ENCODE measurements at regions of chr9 and their contacts with region 1.

Region 1: DNA sequence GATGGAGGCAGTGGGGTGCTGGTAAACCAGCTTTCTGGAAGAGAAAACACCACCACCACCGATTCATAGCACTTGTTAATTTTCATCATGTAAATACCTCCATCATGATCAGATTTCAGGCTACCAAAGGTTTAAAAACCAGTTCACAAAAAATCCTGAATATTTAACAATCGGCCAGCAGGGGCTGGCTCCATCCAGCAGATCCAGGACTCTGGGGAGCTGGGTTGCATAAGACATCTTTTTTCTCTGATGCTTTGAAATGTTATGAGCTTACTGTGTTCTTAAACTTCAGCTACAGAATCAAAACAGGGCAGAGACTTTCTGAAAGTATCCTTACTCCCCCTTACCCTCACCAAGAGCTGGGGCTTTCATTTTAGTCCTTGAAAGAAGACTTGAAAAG is 14.6 kb upstream of the RNF183 start:
- DNase-seq: no peak
- ATAC-seq: no peak
- H3K4me3 ChIP-seq: no peak overlapping the region
- H3K27ac ChIP-seq: no peak overlapping the region
- H3K4me1 ChIP-seq: no peaks in the 10 kb centered on the region
- H3K27me3 ChIP-seq: no peaks in the 10 kb centered on the region
- CTCF ChIP-seq: no peak

Region 2: GRCh38 chr9:113361304-113362018 is 43.7 kb after region 1 on chr9:
- intact Hi-C with region 1: no loop called
- DNase-seq: no peak
- ATAC-seq: peak in 3 of 4 donors; percentile 13 to 56 (median 43)
- H3K4me3 ChIP-seq: no peak overlapping the region
- H3K27ac ChIP-seq: no peak overlapping the region
- H3K4me1 ChIP-seq: no peaks in the 10 kb centered on the region
- H3K27me3 ChIP-seq: no peaks in the 10 kb centered on the region
- CTCF ChIP-seq: no peak

Region 3: DNA sequence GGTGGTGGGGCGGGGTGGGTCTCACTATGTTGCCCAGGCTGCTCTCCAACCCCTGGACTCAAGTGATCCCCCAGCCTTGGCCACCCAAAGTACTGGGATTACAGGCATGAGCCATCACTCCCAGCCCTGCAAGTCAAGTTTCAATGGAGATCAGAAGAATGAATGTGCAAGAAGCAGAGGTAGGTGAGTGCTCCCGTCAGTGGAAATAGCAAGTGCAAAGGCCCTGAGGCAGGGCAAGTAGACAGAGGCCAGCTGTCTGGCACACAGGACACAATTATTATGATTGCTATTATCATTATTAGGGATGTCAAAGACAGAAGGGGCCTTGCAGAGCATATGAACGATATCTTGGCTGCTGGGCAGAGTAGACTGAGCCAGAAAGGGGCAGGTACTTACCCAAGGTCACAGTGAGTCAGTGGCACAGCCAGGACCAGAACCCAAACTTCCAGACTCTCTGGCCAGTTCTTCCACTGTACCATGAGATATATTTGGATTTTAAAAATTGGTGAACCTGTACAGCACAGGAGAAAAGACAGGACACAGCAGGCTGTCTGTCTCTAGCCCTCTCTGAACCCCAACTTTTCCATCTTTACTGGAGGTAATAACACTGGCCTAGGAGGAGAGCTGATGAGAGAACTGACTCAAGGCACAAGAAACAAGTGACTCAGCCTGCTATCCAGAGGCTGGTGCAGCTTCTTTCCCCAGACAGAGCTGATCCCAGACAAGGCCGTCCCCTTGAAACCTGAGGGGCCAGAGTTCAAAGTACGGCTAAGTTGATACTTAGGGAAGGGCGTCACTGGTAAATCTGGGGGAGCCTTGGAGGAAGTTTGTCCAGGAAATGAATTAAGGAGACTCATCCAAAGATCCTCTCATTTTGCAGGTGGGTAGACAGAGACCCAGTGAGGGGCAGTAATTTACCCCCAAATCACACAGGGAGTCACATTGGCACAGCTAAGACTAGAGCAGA is 57.6 kb after region 1 on chr9:
- intact Hi-C with region 1: no loop called
- DNase-seq: peak in 2 of 6 donors; percentile 51 to 61
- ATAC-seq: peak; percentile 26 to 38 (median 34)
- H3K4me3 ChIP-seq: peak overlapping the region; percentile 72 to 91 (median 79)
- H3K27ac ChIP-seq: peak overlapping the region; percentile 93 to 97 (median 94)
- H3K4me1 ChIP-seq: peaks cover 33 to 58% (median 48%) of the 10 kb centered on the region in 3 donors
- H3K27me3 ChIP-seq: no peaks in the 10 kb centered on the region
- CTCF ChIP-seq: no peak

Region 4: GRCh38 chr9:113508111-113508749 is 190.5 kb after region 1 on chr9:
- intact Hi-C with region 1: no loop called
- DNase-seq: peak in 2 of 6 donors; percentile 49 to 59
- ATAC-seq: peak in 2 of 4 donors; percentile 13 to 18
- H3K4me3 ChIP-seq: no peak overlapping the region
- H3K27ac ChIP-seq: peak overlapping the region in 1 of 4 donors; percentile 9
- H3K4me1 ChIP-seq: peaks cover 7 to 13% (median 9%) of the 10 kb centered on the region in 3 donors
- H3K27me3 ChIP-seq: no peaks in the 10 kb centered on the region
- CTCF ChIP-seq: no peak

Region 5: GRCh38 chr9:113548221-113549041 is 230.7 kb after region 1 on chr9:
- intact Hi-C with region 1: no loop called
- DNase-seq: peak in 5 of 6 donors; percentile 40 to 72 (median 60)
- ATAC-seq: peak; percentile 92 to 93 (median 92)
- H3K4me3 ChIP-seq: no peak overlapping the region
- H3K27ac ChIP-seq: peak overlapping the region; percentile 54 to 87 (median 76)
- H3K4me1 ChIP-seq: peaks cover 27 to 53% (median 37%) of the 10 kb centered on the region in 3 donors
- H3K27me3 ChIP-seq: no peaks in the 10 kb centered on the region
- CTCF ChIP-seq: no peak

Region 6: GRCh38 chr9:113669522-113670115 is 351.8 kb after region 1 on chr9:
- intact Hi-C with region 1: loop called in 1 of 3 experiments (anchors 10 kb)
- DNase-seq: no peak
- ATAC-seq: no peak
- H3K4me3 ChIP-seq: no peak overlapping the region
- H3K27ac ChIP-seq: no peak overlapping the region
- H3K4me1 ChIP-seq: no peaks in the 10 kb centered on the region
- H3K27me3 ChIP-seq: no peaks in the 10 kb centered on the region
- CTCF ChIP-seq: no peak

Measured in pancreas (tissue), 10 donors.